ENCODE measurements at regions of chr4 and their contacts with region 1.

Region 1: GRCh38 chr4:69874516-69874915 is 14.6 kb upstream of the SULT1E1 start:
- H3K4me3 Mint-ChIP-seq: no peak overlapping the region
- H3K27ac Mint-ChIP-seq: no peak overlapping the region
- H3K4me1 Mint-ChIP-seq: no peaks in the 10 kb centered on the region
- H3K27me3 Mint-ChIP-seq: no peaks in the 10 kb centered on the region

Region 2: GRCh38 chr4:69800599-69800998 is 73.9 kb before region 1 on chr4:
- intact Hi-C with region 1: no loop called
- H3K4me3 Mint-ChIP-seq: no peak overlapping the region
- H3K27ac Mint-ChIP-seq: no peak overlapping the region
- H3K4me1 Mint-ChIP-seq: no peaks in the 10 kb centered on the region
- H3K27me3 Mint-ChIP-seq: no peaks in the 10 kb centered on the region

Region 3: DNA sequence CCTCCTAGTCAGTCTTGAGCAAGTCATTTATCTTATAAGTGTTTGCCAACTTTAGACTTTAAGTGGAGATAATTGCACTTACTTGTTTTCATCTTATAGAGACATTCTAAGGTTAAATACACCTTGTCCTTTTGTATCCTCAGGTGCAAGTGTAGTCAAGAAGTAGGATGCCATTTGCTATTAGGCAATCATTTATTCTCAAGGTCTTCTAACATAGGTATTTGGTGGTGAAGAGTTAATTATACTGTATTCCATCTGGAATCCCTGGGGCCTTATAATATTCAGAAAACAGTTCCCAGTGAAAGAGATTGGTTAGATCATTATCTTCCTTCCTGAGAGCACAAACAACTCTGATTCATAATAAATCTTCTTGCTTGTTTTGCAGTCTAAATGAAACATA is 38.2 kb before region 1 on chr4:
- intact Hi-C with region 1: loop called (anchors 5 kb)
- H3K4me3 Mint-ChIP-seq: no peak overlapping the region
- H3K27ac Mint-ChIP-seq: no peak overlapping the region
- H3K4me1 Mint-ChIP-seq: peaks cover 15% of the 10 kb centered on the region
- H3K27me3 Mint-ChIP-seq: no peaks in the 10 kb centered on the region

Region 4: DNA sequence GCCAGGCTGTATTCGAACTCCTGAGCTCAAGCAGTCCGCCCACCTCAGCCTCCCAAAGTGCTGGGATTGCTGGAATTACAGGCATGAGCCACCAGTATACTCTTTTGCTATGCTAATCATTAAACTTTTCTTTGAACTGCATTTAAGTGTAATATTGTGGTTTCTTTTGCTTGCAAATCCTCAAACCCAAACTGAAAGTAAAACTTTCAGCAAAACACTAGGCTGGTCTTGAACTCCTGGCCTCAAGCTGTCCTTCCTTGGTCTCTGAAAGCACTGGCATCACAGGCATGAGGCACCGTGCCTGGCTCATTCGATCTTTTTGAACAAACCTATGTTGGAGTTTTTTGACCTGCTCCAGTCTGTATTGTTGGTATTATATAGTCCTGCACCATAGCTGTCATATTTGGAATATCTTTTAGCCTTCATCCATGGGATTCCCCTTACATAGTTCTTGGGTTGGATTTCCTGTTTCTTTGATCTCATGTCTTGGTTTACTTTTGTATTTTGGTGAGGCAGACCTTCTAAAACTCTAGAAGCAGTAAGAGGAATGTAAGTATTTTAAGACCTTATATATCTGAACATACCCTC is 1061.8 kb after region 1 on chr4:
- intact Hi-C with region 1: no loop called
- H3K4me3 Mint-ChIP-seq: no peak overlapping the region
- H3K27ac Mint-ChIP-seq: peak overlapping the region; percentile 50
- H3K4me1 Mint-ChIP-seq: peaks cover 32% of the 10 kb centered on the region
- H3K27me3 Mint-ChIP-seq: no peaks in the 10 kb centered on the region

Measured in dendritic cell treated with granulocyte-macrophage colony-stimulating factor and Interleukin-4, amounts not matched to agents 40 ng/mL and 50 ng/mL, for 4 days (primary cell).